ENCODE measurements at regions of chr22 and their contacts with region 1.

Region 1: DNA sequence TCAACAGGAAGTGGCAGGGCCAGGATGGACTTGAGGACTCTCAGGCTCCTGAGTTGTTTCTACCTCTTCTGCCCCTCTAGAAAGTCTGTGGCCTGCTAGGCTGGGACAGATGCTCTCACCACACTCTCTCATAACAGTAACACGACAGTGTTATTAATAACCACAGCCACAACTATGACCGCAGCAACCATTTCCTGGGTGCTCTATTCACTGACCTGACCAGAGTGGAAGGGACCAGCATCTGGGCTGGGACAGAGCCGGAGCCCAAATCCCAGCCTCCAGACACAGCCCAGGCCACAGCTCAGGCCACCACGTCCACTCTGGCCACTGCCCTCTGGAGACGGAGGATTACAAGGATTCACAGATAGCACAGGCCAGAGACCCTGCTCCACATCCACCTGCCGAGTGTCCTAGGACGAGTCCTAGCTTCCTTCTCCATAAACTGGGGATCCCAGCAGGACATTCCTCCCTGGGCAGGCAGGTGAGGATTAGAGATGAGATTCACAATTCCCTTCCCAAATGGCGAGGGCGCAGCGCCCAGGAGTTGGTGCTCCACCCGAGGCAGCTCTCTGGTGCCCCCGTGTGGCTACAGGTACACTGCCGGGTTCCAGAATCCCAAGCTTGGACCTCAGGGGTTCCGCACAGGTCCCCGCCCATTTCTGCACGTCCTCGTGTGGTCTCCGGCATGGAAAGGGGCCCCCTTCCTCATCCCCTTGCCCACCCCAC is 7.0 kb downstream of the PNPLA5 start:
- DNase-seq: peak; percentile 89
- ATAC-seq: peak; percentile 72
- H3K4me3 Mint-ChIP-seq: no peak overlapping the region
- H3K27ac Mint-ChIP-seq: no peak overlapping the region
- H3K4me1 Mint-ChIP-seq: peaks cover 4% of the 10 kb centered on the region
- H3K27me3 Mint-ChIP-seq: no peaks in the 10 kb centered on the region
- CTCF ChIP-seq: peak; percentile 85

Region 2: DNA sequence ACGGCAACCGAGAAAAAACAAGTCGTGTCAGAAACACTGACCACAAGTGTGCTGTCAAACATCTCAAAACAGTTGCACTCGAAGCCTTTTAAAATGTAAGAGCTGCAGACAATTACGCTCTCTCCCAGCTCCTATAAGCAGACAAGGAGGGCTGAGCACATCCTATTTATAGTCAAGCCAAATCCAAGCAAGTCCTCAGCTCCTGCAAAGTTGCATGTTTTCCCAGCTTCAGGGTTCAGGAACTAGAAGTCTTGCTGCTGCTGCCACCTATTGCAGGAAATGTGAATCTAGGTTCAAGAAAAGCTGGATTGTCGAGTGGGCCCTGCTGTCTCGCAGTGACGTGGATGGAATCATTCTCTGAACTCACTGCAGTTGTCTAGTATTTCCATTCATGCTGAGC is 88.2 kb before region 1 on chr22:
- CTCF ChIA-PET with region 1: interaction called, 13 read pairs
- POLR2A ChIA-PET with region 1: no interaction called
- DNase-seq: no peak
- ATAC-seq: peak; percentile 34
- H3K4me3 Mint-ChIP-seq: no peak overlapping the region
- H3K27ac Mint-ChIP-seq: no peak overlapping the region
- H3K4me1 Mint-ChIP-seq: peaks cover 6% of the 10 kb centered on the region
- H3K27me3 Mint-ChIP-seq: peaks cover 3% of the 10 kb centered on the region
- CTCF ChIP-seq: no peak

Region 3: GRCh38 chr22:43848366-43849171 is 36.2 kb before region 1 on chr22:
- CTCF ChIA-PET with region 1: interaction called, 140 read pairs
- POLR2A ChIA-PET with region 1: no interaction called
- DNase-seq: peak; percentile 42
- ATAC-seq: peak; percentile 50; the same call in 1 of the 2 replicates
- H3K4me3 Mint-ChIP-seq: no peak overlapping the region
- H3K27ac Mint-ChIP-seq: peak overlapping the region; percentile 72
- H3K4me1 Mint-ChIP-seq: peaks cover 32% of the 10 kb centered on the region
- H3K27me3 Mint-ChIP-seq: no peaks in the 10 kb centered on the region
- CTCF ChIP-seq: no peak

Region 4: DNA sequence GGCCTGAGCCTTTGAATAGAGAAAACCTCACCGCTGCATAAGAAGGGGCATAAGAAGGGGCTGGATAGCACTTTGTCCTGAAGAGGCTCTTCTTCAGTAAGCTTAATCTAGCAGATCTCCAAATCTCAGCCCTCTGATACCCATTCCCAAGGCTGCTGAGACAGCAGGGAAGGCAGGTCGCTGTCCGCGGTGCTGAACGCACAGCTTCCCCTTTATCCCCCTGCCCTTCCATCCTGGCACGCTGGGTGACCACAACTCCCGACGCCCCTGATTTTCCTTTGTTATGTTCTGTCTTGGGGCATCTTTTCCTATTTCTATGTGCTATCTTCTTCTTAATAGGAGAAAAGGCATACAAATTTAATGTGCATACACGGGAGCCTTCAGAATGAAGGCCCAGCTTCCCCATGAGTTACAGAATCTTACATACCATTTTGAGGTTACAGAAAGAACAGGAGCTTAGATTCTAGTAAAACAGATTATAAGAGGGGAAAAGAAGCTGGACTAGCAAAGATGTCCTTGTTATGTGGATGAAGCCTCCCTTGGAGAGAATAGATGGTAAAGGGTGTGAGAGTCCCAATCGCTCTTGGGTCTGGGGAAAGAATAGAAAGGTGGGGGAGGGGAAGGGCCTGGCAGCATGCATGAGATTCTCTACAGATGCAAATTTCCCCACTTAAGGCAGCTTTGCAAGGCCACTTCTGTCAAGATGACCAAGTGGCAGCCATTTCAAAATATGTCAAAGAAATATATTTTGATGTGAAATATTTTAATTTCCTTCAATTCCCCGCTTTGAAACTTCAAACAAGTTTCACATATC is 16.7 kb before region 1 on chr22:
- CTCF ChIA-PET with region 1: interaction called, 97 read pairs
- POLR2A ChIA-PET with region 1: interaction called, 4 read pairs
- DNase-seq: peak; percentile 90
- ATAC-seq: peak; percentile 94
- H3K4me3 Mint-ChIP-seq: peak overlapping the region; percentile 33
- H3K27ac Mint-ChIP-seq: no peak overlapping the region; the same call in none of the 2 replicates
- H3K4me1 Mint-ChIP-seq: peaks cover 18% of the 10 kb centered on the region
- H3K27me3 Mint-ChIP-seq: peaks cover 12% of the 10 kb centered on the region; the same call in 1 of the 2 replicates
- CTCF ChIP-seq: no peak

Region 5: DNA sequence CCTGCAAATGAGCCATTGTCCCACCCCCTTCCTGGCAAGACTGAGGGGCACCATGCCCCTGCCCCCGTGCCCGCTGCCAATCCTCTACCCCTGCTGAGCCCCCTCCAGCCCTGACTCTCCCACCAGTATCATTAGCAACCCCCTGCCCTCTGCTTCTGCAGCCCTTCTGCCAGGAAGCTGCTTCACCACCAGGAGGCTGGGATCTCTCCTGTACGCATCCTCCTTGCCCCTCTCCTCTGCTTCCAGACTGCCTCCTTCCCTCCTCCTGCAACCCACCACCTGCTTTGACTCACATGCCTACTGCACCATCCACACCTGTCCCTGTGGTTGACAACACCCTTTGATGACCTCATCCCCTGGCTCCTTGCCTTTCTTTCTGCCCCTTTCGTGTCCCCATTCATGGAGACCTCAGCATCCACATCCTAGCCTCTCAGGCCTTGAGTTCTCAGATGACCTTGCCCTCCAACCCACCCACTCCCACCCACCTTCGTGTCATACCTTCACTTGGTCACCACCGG is 25.5 kb after region 1 on chr22:
- CTCF ChIA-PET with region 1: interaction called, 23 read pairs
- POLR2A ChIA-PET with region 1: no interaction called
- DNase-seq: no peak
- ATAC-seq: no peak
- H3K4me3 Mint-ChIP-seq: no peak overlapping the region
- H3K27ac Mint-ChIP-seq: no peak overlapping the region
- H3K4me1 Mint-ChIP-seq: peaks cover 11% of the 10 kb centered on the region
- H3K27me3 Mint-ChIP-seq: peaks cover 26% of the 10 kb centered on the region
- CTCF ChIP-seq: no peak

Region 6: DNA sequence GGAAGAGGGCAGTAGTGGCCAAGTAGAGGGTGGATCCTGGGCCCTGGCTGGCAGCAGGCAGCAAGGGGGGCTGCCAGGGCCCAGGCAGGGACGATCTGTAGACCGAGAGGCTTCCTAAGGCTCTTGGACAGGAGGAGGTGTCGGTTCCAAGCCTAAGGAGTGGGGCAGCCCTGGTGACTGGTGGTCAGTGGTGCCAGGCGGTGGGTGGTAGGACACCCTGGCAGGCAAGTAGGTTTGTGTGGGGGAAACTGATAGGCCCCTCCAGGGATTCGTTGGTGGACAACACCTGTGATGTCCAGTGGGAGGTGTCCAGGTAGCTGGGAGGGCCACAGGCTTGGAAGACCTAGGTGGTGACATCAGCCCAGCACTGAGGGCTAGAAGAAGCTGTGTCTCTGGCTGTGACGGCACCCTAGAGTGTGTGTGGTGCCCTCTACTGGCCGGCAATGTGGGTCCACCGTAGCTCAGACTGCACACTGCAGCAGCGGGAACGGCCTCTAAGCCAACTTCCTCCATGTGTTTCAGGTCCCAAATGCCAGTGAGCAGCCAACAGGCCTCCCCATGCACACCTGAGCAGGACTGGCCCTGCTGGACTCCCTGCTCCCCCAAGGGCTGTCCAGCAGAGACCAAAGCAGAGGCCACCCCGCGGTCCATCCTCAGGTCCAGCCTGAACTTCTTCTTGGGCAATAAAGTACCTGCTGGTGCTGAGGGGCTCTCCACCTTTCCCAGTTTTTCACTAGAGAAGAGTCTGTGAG is 61.0 kb after region 1 on chr22:
- CTCF ChIA-PET with region 1: interaction called, 48 read pairs
- POLR2A ChIA-PET with region 1: no interaction called
- DNase-seq: peak; percentile 75
- ATAC-seq: peak; percentile 95
- H3K4me3 Mint-ChIP-seq: no peak overlapping the region
- H3K27ac Mint-ChIP-seq: no peak overlapping the region
- H3K4me1 Mint-ChIP-seq: no peaks in the 10 kb centered on the region
- H3K27me3 Mint-ChIP-seq: no peaks in the 10 kb centered on the region
- CTCF ChIP-seq: peak; percentile 57

Measured in WTC11 (cell line).